Spleen (tissue), 13 donors: ENCODE measurements at regions of chr13 and their contacts with region 1.

Region 1: GRCh38 chr13:39684531-39685137 is 29.2 kb downstream of the COG6 start:
- DNase-seq: no peak
- H3K4me3 ChIP-seq: no peak overlapping the region
- H3K27ac ChIP-seq: no peak overlapping the region
- H3K4me1 ChIP-seq: peaks cover 0 to 12% (median 0%) of the 10 kb centered on the region in 6 donors
- H3K27me3 ChIP-seq: no peaks in the 10 kb centered on the region
- CTCF ChIP-seq: peak in 9 of 11 experiments; percentile 13 to 70 (median 51)
- POLR2A ChIP-seq: no peak

Region 2: DNA sequence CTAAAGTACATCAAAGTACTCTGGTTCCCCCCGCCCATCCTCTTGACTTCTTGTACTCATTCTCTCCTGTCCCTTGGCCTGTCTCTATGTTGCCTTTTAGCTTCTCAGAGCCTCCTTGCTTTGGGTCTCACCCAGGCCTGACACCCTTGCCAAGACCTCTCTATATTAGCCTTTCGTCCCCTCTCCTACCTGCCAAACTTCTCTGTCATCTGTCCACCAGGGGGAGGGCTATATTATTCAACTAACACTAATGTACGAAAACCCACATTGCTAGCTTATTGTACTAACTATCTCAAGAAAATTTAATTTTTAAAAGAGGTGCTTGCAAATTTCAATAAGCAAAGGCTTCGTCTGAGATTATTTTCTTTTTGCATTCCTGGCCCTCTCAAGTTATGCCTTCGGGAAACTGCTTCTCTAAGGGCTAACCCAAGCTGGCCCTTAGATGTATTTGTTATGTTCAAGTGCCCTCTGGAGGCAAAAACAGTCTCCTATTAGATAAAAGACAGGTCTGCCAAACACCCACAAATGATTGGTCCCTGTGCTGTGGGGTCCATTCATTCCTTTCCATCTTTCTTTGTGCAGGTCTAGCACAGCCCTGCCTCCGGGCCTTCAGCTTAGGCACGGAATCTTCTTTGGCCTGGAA is 1092.7 kb after region 1 on chr13:
- intact Hi-C with region 1: loop called (anchors 5 kb)
- DNase-seq: no peak
- H3K4me3 ChIP-seq: peak overlapping the region in 5 of 8 donors; percentile 19 to 61 (median 28)
- H3K27ac ChIP-seq: peak overlapping the region; percentile 48 to 88 (median 80)
- H3K4me1 ChIP-seq: peaks cover 4 to 31% (median 19%) of the 10 kb centered on the region in 6 donors
- H3K27me3 ChIP-seq: no peaks in the 10 kb centered on the region
- CTCF ChIP-seq: peak; percentile 48 to 82 (median 76)
- POLR2A ChIP-seq: no peak